ENCODE measurements at regions of chr1 and their contacts with region 1.

Region 1: DNA sequence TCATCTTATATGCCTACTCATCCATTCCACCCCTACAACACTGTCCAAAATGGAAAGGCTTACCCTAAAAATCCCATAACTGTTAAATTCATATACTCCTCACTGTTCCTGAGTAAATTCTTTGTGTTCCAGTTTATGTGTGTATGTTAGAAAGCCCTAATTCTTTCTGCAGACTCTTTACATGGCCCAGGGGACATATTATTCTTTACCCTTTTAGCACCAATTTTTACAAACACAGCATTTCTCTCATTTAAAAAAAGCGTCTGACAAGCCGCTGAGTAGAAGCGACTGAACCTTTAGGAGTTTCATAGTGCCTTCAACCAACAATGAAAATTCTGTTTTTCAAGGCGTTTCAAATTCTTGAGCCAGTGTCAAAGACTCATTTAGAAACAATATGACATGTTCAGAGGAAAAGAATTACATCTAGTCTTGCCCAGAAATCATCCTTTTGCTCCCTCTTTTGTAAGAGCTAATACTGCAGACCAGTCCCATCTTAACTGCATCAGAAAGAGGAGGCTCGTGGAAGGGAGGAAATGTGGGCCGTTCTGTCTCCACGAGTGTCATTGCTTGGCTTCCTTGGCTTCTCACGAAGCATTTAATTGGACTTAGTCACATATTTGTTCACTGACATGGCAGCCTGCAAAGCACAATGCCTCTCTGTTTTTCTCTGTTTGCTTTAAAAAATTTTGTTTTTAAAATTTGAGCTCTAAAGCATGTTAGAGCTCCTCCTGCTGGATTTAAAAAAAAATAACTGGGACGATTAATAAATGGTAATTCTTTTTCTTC is 21.3 kb upstream of the C1orf105 start:
- DNase-seq: peak in 4 of 5 donors; percentile 41 to 66 (median 54)
- ATAC-seq: peak; percentile 70 to 90 (median 86)
- H3K4me3 ChIP-seq: peak overlapping the region in 6 of 12 donors; percentile 8 to 22 (median 14)
- H3K27ac ChIP-seq: peak overlapping the region in 11 of 12 donors; percentile 19 to 78 (median 68)
- H3K4me1 ChIP-seq: peaks cover 0 to 57% (median 30%) of the 10 kb centered on the region in 12 donors
- H3K27me3 ChIP-seq: no peaks in the 10 kb centered on the region
- CTCF ChIP-seq: peak; percentile 50 to 82 (median 67)
- POLR2A ChIP-seq: no peak

Region 2: GRCh38 chr1:172041742-172042141 is 357.4 kb before region 1 on chr1:
- intact Hi-C with region 1: loop called in 2 of 10 experiments (anchors 2 to 5 kb)
- DNase-seq: no peak
- ATAC-seq: peak in 1 of 4 donors; percentile 69
- H3K4me3 ChIP-seq: peak overlapping the region in 4 of 12 donors; percentile 12 to 42 (median 28)
- H3K27ac ChIP-seq: no peak overlapping the region
- H3K4me1 ChIP-seq: no peaks in the 10 kb centered on the region
- H3K27me3 ChIP-seq: no peaks in the 10 kb centered on the region
- CTCF ChIP-seq: peak; percentile 23 to 59 (median 44)
- POLR2A ChIP-seq: no peak

Region 3: GRCh38 chr1:172135076-172135672 is 264.0 kb before region 1 on chr1:
- intact Hi-C with region 1: loop called in 6 of 10 experiments (anchors 5 to 10 kb)
- DNase-seq: no peak
- ATAC-seq: no peak
- H3K4me3 ChIP-seq: no peak overlapping the region
- H3K27ac ChIP-seq: no peak overlapping the region
- H3K4me1 ChIP-seq: peaks cover 0 to 23% (median 0%) of the 10 kb centered on the region in 12 donors
- H3K27me3 ChIP-seq: no peaks in the 10 kb centered on the region
- CTCF ChIP-seq: peak; percentile 48 to 66 (median 54)
- POLR2A ChIP-seq: no peak

Region 4: GRCh38 chr1:172180501-172181285 is 218.5 kb before region 1 on chr1:
- intact Hi-C with region 1: loop called in 1 of 10 experiments (anchors 5 kb)
- DNase-seq: peak; percentile 48 to 71 (median 61)
- ATAC-seq: peak; percentile 51 to 92 (median 84)
- H3K4me3 ChIP-seq: peak overlapping the region in 10 of 12 donors; percentile 6 to 45 (median 26)
- H3K27ac ChIP-seq: peak overlapping the region; percentile 22 to 93 (median 78)
- H3K4me1 ChIP-seq: peaks cover 4 to 43% (median 17%) of the 10 kb centered on the region in 12 donors
- H3K27me3 ChIP-seq: no peaks in the 10 kb centered on the region
- CTCF ChIP-seq: no peak
- POLR2A ChIP-seq: no peak

Region 5: GRCh38 chr1:172343240-172344160 is 55.7 kb before region 1 on chr1:
- intact Hi-C with region 1: loop called in 1 of 10 experiments (anchors 10 kb)
- DNase-seq: no peak
- ATAC-seq: peak in 3 of 4 donors; percentile 37 to 80 (median 71)
- H3K4me3 ChIP-seq: peak overlapping the region in 2 of 12 donors; percentile 1 to 20
- H3K27ac ChIP-seq: peak overlapping the region in 10 of 12 donors; percentile 3 to 77 (median 58)
- H3K4me1 ChIP-seq: peaks cover 0 to 34% (median 7%) of the 10 kb centered on the region in 12 donors
- H3K27me3 ChIP-seq: no peaks in the 10 kb centered on the region
- CTCF ChIP-seq: no peak
- POLR2A ChIP-seq: no peak

Measured in heart left ventricle (tissue), 16 donors.